ENCODE measurements at regions of chr2 and their contacts with region 1.

Region 1: DNA sequence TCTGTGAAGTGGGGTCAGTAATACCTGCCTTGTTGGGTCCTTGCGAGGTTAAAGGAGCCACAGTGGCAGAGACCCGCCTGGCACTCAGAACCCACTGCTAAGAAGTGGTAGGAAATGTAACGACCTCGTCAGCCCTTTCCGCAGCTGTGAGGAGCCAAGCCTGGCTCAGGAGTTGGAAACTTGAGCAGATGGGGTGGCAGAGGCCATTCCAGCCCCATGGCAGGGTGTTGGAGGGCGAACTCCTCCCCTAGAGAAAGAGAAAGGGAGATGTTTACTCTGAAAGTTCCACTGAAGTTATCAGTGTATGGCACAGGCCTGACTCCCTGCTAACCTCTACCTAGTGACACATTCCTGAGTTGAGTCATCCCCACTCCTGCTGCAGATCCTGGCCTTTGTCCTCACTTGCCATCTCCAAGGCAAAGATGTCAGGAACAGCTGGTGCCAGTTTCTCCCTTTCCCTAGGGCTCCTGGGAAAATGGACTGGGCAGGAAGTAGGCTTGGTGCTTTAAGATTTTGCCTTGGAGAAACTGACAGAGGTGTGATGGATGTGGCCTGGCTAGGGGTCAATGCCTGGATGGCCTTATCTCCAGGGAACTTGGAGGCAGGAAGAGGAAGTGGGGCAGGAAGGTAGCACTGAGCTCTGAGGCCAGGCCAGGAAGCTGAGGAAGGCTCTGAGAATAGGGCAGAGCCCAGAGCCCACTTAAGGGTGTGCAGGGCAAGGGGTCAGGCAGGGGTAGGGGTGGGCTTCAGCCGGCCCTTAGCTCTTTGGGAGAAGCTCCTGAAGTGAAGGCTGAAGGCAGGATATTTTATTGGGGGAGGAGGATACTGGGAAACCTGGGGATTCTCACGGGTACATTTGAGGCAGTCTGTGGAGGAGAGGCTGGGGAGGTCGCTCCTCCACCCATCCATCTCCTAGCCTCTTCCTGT is 889 bp downstream of the VAMP5 start:
- DNase-seq: peak; percentile 54
- H3K4me3 Mint-ChIP-seq: peak overlapping the region; percentile 82
- H3K27ac Mint-ChIP-seq: peak overlapping the region; percentile 91
- H3K4me1 Mint-ChIP-seq: peaks cover 36% of the 10 kb centered on the region
- H3K27me3 Mint-ChIP-seq: no peaks in the 10 kb centered on the region

Region 2: DNA sequence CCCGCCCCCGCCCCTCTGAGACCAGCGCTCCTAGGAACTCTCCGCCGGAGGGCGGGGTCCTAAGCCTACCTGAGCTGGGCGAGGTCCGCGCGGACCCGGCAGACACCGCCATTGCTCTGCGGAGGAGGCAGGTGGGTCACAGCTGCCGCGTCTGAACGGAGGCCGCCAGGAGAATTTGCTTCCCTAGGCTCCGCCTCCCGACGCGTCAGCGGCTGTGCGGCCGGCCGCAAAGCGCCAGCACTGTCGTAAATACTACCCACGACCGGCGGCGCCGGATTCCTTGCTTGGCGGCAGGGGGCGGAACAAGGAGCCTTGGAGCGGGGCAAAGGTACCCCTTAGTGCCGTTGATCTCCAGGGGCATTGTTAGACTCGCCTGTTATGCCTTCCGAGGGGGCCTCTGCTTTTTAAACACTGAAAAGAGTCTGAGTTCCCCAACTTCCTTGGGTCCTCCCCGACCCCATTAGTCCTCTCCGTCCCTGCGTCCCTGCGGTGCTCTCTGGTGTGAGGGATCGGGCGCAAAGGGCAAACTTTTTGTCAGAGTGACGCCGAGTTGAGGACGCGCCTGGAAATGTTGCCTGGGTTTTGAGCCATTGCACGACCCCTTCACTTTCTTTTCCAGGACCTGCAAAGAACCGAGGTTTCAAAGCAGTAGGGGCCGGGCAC is 23.7 kb before region 1 on chr2 and contains the start of gene GGCX:
- CTCF ChIA-PET with region 1: interaction called, 3 read pairs
- POLR2A ChIA-PET with region 1: no interaction called
- intact Hi-C with region 1: loop called (anchors 1 kb)
- DNase-seq: peak; percentile 98
- H3K4me3 Mint-ChIP-seq: peak within 1 kb of the TSS; percentile 92
- H3K27ac Mint-ChIP-seq: peak within 1 kb of the TSS; percentile 83
- H3K4me1 Mint-ChIP-seq: peaks cover 37% of the 10 kb centered on the region
- H3K27me3 Mint-ChIP-seq: no peaks in the 10 kb centered on the region
- total RNA-seq, gene GGCX: 24.2 to 25.2 TPM

Region 3: DNA sequence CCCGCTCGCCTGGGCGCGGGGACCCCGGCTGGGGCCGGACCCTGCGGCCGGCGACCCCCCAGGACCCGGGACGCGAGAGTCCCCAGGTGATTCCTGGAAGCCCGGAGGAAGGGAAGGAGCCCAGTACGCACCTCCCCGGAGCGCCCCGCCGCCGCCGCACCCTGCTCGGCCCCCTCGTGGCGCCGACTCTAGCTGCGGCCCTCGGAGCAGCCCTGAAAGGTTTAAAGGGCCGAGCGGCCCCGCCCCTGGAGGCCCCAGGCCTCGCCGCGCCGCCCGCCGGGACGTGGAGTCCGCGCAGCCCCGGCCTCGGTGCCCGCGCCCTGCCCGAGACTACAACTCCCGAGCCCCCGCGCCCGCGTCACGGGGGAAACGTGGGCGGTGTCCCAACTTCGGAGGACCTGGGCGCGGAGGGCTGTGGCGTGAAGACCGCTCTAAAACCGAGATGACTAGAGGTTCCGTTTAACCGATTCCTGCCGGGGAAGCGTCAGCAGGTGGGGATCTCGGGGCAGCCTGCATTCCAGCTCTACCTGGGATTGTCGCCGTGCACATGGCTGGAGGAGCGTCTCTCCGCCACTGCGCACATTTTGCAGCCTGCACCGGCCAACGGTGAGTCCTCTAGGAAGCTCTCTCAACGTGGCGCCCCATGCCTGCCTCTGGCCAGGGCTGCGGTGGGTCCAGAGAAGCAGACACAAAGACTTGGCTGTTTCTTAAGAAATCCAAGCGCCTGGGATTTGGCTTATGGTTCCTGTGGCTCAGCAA is 17.5 kb after region 1 on chr2 and contains the start of gene TMEM150A:
- CTCF ChIA-PET with region 1: no interaction called
- POLR2A ChIA-PET with region 1: no interaction called
- intact Hi-C with region 1: loop called (anchors 2 kb)
- DNase-seq: peak; percentile 92
- H3K4me3 Mint-ChIP-seq: peak within 1 kb of the TSS; percentile 80
- H3K27ac Mint-ChIP-seq: peak within 1 kb of the TSS; percentile 67
- H3K4me1 Mint-ChIP-seq: peaks cover 27% of the 10 kb centered on the region
- H3K27me3 Mint-ChIP-seq: no peaks in the 10 kb centered on the region
- total RNA-seq, gene TMEM150A: 1.2 to 1.6 TPM

Region 4: GRCh38 chr2:85611705-85612587 is 26.8 kb after region 1 on chr2 and contains the start of gene C2orf68:
- CTCF ChIA-PET with region 1: no interaction called
- POLR2A ChIA-PET with region 1: interaction called, 5 read pairs
- intact Hi-C with region 1: loop called (anchors 2 kb)
- DNase-seq: peak; percentile 94
- H3K4me3 Mint-ChIP-seq: peak within 1 kb of the TSS; percentile 95
- H3K27ac Mint-ChIP-seq: peak within 1 kb of the TSS; percentile 91
- H3K4me1 Mint-ChIP-seq: peaks cover 29% of the 10 kb centered on the region
- H3K27me3 Mint-ChIP-seq: no peaks in the 10 kb centered on the region
- total RNA-seq, gene C2orf68: 36.3 to 39.1 TPM

Measured in activated CD4-positive, alpha-beta memory T cell treated with anti-CD3 and anti-CD28 coated beads for 36 hours (primary cell).